ENCODE measurements at regions of chr1 and their contacts with region 1.

Region 1: DNA sequence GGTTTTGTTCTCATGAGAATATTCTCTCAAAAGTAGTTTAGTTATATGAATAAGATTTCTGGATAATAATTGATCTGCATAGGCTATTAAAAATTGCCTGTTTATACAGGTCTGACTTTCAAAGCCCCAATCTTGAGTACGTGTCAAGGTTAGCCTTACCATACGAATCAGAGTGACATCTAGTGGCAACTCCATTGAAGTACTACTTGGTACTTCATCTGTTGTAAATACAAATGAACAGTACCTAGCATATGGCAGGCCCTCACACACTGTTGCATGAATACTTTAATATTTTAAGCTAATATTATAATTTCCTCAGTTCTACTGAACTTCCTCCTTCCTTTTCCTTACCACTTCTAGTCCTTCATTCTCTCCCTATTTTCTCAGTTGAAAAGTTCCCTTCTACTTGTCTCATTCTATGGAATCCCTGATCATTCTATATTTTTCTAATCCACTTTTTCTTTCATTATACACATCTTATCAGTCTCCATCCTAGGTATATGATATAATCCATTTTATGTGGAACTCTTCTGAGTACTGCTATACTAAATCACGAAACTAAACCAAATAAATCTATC is 101.2 kb downstream of the AKT3 start:
- DNase-seq: peak in 7 of 9 donors; percentile 11 to 59 (median 44)
- ATAC-seq: peak; percentile 99
- H3K4me3 ChIP-seq: no peak overlapping the region
- H3K4me3 Mint-ChIP-seq: no peak overlapping the region
- H3K27ac ChIP-seq: no peak overlapping the region
- H3K27ac Mint-ChIP-seq: peak overlapping the region in 6 of 9 donors; percentile 23 to 84 (median 71)
- H3K4me1 ChIP-seq: peaks cover 0 to 12% of the 10 kb centered on the region in 2 donors
- H3K4me1 Mint-ChIP-seq: peaks cover 2 to 68% (median 39%) of the 10 kb centered on the region in 7 donors
- H3K27me3 ChIP-seq: no peaks in the 10 kb centered on the region
- H3K27me3 Mint-ChIP-seq: no peaks in the 10 kb centered on the region

Region 2: DNA sequence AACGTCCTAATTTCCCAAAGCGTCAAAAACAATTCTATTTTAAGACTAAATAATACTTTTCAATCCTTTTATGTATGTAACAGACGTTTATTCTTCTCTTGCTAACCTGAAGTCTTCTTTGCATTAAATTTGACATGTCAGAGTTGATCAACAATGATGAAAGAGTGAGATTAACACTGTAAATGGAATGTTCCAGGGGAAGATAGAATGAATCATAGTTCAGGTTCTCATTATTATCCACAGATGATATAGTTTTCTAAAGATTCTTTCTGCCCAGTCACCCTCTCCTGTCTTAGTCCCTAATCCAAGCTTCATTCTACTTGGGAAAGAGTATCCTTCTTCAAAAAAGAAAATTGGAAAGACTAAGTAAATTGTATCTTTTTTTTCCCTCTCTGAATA is 454.1 kb before region 1 on chr1:
- CTCF ChIA-PET with region 1: no interaction called
- POLR2A ChIA-PET with region 1: no interaction called
- intact Hi-C with region 1: no loop called
- DNase-seq: no peak
- ATAC-seq: no peak
- H3K4me3 ChIP-seq: no peak overlapping the region
- H3K4me3 Mint-ChIP-seq: no peak overlapping the region
- H3K27ac ChIP-seq: no peak overlapping the region
- H3K27ac Mint-ChIP-seq: peak overlapping the region in 1 of 9 donors; percentile 28
- H3K4me1 ChIP-seq: no peaks in the 10 kb centered on the region
- H3K4me1 Mint-ChIP-seq: peaks cover 0 to 11% (median under 1%) of the 10 kb centered on the region in 7 donors
- H3K27me3 ChIP-seq: no peaks in the 10 kb centered on the region
- H3K27me3 Mint-ChIP-seq: no peaks in the 10 kb centered on the region

Region 3: DNA sequence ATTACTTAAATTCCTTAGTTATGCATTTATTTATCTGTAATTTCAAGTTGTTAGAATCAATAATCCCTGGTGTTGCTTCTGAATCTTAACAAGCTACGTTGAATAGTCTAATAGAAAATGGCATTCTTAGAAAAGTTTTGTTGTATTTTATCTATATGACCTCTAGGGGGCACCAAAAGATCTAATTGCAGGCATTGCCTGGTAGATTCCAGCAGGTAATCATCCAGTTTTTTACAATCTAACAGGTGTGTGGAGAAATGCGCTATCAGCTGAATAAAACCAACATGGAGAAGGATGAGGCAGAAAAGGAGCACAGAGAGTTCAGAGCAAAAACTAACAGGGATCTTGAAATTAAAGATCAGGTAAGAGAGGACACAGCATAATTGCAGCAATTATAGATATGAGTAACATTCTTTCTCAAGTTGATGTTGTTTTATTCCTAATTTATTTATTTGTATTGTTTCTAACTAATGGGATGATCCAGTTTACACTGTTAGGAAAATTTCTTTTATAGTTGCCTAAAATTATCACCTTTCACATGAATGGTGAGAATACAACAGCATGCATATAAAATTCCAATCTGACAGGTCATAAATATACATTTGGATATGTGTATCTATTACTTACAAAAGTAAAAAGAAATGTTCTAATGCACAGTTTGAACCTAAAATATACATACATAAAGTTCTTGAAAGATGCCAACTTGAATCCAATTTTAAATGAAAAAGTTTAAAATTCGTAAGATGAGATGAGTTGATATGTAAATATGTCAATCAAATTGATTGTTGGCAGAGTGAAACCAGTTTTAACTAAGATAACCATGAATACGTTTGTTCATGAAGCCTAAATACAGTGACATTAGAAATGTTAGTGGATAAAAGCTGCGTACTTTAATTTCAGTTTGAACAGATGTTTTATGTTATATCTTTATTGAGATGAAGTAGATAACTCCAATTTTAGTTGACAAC is 404.5 kb before region 1 on chr1:
- CTCF ChIA-PET with region 1: no interaction called
- POLR2A ChIA-PET with region 1: no interaction called
- intact Hi-C with region 1: loop called (anchors 1 kb)
- DNase-seq: peak in 7 of 9 donors; percentile 22 to 65 (median 51)
- ATAC-seq: peak; percentile 64
- H3K4me3 ChIP-seq: no peak overlapping the region
- H3K4me3 Mint-ChIP-seq: no peak overlapping the region
- H3K27ac ChIP-seq: no peak overlapping the region
- H3K27ac Mint-ChIP-seq: no peak overlapping the region
- H3K4me1 ChIP-seq: no peaks in the 10 kb centered on the region
- H3K4me1 Mint-ChIP-seq: peaks cover 0 to 12% (median 3%) of the 10 kb centered on the region in 7 donors
- H3K27me3 ChIP-seq: no peaks in the 10 kb centered on the region
- H3K27me3 Mint-ChIP-seq: no peaks in the 10 kb centered on the region

Region 4: GRCh38 chr1:243471754-243472745 is 276.7 kb before region 1 on chr1:
- CTCF ChIA-PET with region 1: no interaction called
- POLR2A ChIA-PET with region 1: no interaction called
- intact Hi-C with region 1: loop called in 1 of 2 experiments (anchors 5 kb)
- DNase-seq: no peak
- ATAC-seq: peak; percentile 60
- H3K4me3 ChIP-seq: no peak overlapping the region
- H3K4me3 Mint-ChIP-seq: peak overlapping the region in 2 of 10 donors; percentile 41 to 85
- H3K27ac ChIP-seq: no peak overlapping the region
- H3K27ac Mint-ChIP-seq: peak overlapping the region in 2 of 9 donors; percentile 26 to 63
- H3K4me1 ChIP-seq: no peaks in the 10 kb centered on the region
- H3K4me1 Mint-ChIP-seq: peaks cover 9 to 20% (median 13%) of the 10 kb centered on the region in 7 donors
- H3K27me3 ChIP-seq: no peaks in the 10 kb centered on the region
- H3K27me3 Mint-ChIP-seq: no peaks in the 10 kb centered on the region

Region 5: GRCh38 chr1:243763806-243764205 is 15.0 kb after region 1 on chr1:
- CTCF ChIA-PET with region 1: interaction called, 4 read pairs
- POLR2A ChIA-PET with region 1: interaction called, 5 read pairs
- intact Hi-C with region 1: loop called in 1 of 2 experiments (anchors 2 kb)
- DNase-seq: no peak
- ATAC-seq: no peak
- H3K4me3 ChIP-seq: no peak overlapping the region
- H3K4me3 Mint-ChIP-seq: no peak overlapping the region
- H3K27ac ChIP-seq: no peak overlapping the region
- H3K27ac Mint-ChIP-seq: no peak overlapping the region
- H3K4me1 ChIP-seq: no peaks in the 10 kb centered on the region
- H3K4me1 Mint-ChIP-seq: peaks cover 0 to 61% (median 51%) of the 10 kb centered on the region in 7 donors
- H3K27me3 ChIP-seq: no peaks in the 10 kb centered on the region
- H3K27me3 Mint-ChIP-seq: no peaks in the 10 kb centered on the region

Region 6: DNA sequence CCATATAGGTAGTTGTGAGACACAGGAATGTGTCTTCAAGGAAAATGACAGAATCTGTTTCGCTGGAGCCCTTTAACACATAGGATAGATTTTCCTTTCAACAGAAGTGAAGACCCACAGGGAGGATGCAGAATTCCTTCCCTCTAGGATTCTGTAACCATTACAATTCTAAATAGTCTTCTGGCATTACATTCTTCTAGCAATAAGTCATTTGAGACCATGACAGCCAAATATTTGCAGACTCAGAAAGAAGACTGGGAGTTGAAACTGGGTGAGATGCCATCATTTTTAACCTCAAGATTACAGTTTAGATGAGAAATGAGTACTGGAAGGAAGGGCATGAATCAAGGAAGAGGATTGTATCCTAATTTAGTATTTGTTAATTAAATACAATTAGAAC is 363.8 kb after region 1 on chr1:
- CTCF ChIA-PET with region 1: no interaction called
- POLR2A ChIA-PET with region 1: no interaction called
- intact Hi-C with region 1: loop called in 1 of 2 experiments (anchors 10 kb)
- DNase-seq: no peak
- ATAC-seq: no peak
- H3K4me3 ChIP-seq: no peak overlapping the region
- H3K4me3 Mint-ChIP-seq: no peak overlapping the region
- H3K27ac ChIP-seq: no peak overlapping the region
- H3K27ac Mint-ChIP-seq: no peak overlapping the region
- H3K4me1 ChIP-seq: no peaks in the 10 kb centered on the region
- H3K4me1 Mint-ChIP-seq: no peaks in the 10 kb centered on the region
- H3K27me3 ChIP-seq: no peaks in the 10 kb centered on the region
- H3K27me3 Mint-ChIP-seq: peaks cover under 1 to 8% (median 5%) of the 10 kb centered on the region in 5 donors